ENCODE measurements at regions of chr13 and their contacts with region 1.

Region 1: GRCh38 chr13:26498656-26499591 is 58.6 kb upstream of the WASF3 start:
- DNase-seq: peak; percentile 8
- H3K4me3 ChIP-seq: no peak overlapping the region
- H3K27ac ChIP-seq: no peak overlapping the region
- H3K4me1 ChIP-seq: no peaks in the 10 kb centered on the region
- H3K27me3 ChIP-seq: no peaks in the 10 kb centered on the region
- CTCF ChIP-seq: peak in 2 of 4 experiments; percentile 11 to 19
- POLR2A ChIP-seq: no peak

Region 2: DNA sequence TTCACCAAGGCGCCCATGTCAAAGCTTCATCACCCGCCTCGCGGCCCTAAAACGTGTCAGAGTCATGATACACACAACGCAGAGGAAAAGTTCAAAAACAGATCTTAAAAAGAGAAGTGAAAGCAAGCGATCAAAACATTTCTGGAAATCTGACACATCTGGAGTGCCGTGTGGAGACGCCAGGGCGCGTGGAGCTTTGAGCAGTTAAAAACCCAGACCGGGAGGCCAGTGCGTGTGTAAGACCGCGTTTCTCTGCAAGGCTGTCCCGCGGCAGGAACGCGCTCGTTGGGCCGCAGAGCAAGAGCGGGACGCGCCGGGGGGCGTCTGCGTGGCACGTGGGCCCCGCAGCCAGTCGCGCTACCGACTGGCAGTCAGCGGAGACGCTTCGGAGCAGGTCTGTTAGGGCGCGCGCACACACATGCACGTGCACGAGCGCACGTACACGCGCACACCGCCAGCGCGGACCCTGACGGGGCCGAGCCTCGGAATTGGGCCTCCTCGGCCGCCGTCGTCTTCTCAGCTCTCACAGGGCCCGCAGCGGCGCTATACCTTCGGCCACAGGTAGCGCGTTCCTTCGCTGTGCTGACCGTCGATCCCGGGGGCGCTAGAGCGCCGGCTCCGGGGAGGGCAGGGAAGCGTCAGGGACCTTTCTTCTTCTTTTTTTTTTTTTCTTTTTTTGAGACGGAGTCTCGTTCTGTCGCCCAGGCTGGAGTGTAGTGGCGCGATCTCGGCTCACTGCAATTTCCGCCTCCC is 312.6 kb before region 1 on chr13:
- intact Hi-C with region 1: loop called (anchors 5 kb)
- DNase-seq: peak; percentile 87
- H3K4me3 ChIP-seq: peak overlapping the region; percentile 42 to 53
- H3K27ac ChIP-seq: peak overlapping the region; percentile 48 to 67
- H3K4me1 ChIP-seq: no peaks in the 10 kb centered on the region
- H3K27me3 ChIP-seq: no peaks in the 10 kb centered on the region
- CTCF ChIP-seq: peak in 3 of 4 experiments; percentile 27 to 72 (median 68)
- POLR2A ChIP-seq: peak; percentile 29